ENCODE measurements at regions of chr6 and their contacts with region 1.

Region 1: GRCh38 chr6:37858363-37858762 is 38.8 kb downstream of the ZFAND3 start:
- DNase-seq: no peak
- H3K4me3 Mint-ChIP-seq: no peak overlapping the region
- H3K27ac Mint-ChIP-seq: peak overlapping the region; percentile 92
- H3K4me1 Mint-ChIP-seq: peaks cover 49% of the 10 kb centered on the region
- H3K27me3 Mint-ChIP-seq: no peaks in the 10 kb centered on the region

Region 2: DNA sequence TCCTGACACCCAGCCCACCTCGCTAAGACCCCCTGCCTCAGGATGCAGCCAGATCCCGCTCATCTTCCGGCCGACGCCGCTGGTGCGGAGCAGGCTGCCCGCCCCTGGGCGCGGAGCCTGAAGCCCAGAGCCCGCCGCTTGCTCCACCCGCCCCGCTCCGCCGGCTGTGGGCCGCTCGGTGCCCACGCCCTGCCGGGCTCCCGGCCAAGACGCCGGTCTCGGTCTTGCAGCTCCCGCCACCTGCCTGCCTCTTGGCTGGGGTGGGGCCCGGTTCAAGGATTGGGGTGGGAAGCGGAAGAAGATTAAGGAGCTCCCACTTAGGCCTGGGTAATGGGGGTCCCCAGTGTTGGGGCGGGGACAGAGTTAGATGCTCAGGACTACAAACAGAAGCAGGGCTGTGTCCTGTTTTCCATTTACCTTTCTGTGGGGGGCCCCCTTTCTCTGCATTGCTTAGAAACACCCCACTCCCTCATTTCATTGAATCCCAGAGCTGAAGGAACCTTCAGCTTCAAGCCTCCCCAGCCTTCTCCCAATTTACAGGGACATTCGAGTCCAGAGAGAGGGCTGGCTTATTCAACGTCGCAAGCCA is 233.3 kb before region 1 on chr6:
- intact Hi-C with region 1: no loop called
- DNase-seq: no peak
- H3K4me3 Mint-ChIP-seq: no peak overlapping the region
- H3K27ac Mint-ChIP-seq: no peak overlapping the region
- H3K4me1 Mint-ChIP-seq: peaks cover 18% of the 10 kb centered on the region
- H3K27me3 Mint-ChIP-seq: peaks cover 21% of the 10 kb centered on the region

Region 3: GRCh38 chr6:37819177-37819823 is 39.1 kb before region 1 on chr6 and contains the start of gene ZFAND3:
- intact Hi-C with region 1: loop called (anchors 1 kb)
- DNase-seq: peak; percentile 93
- H3K4me3 Mint-ChIP-seq: peak within 1 kb of the TSS; percentile 95
- H3K27ac Mint-ChIP-seq: peak within 1 kb of the TSS; percentile 97
- H3K4me1 Mint-ChIP-seq: peaks cover 52% of the 10 kb centered on the region
- H3K27me3 Mint-ChIP-seq: peaks cover 9% of the 10 kb centered on the region
- total RNA-seq, gene ZFAND3: 36.9 and 44.1 TPM in 2 replicates

Region 4: DNA sequence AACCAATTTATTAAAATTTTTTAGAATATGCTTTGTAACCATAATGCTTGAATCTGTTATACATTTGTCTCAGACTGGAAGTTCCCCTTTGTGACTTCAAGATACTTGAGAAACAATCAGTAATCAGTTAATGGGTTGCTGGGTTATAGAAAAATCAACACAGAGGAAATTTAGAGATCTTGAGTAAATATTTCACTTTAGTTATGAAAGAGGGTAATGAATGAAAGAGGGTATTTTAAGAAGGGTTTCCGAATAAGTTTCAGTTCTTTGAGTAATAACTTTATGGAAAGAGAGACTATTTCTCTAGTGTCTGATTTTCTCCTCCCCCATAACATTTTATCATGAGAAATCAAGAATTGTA is 17.4 kb before region 1 on chr6:
- intact Hi-C with region 1: loop called (anchors 1 kb)
- DNase-seq: no peak
- H3K4me3 Mint-ChIP-seq: no peak overlapping the region
- H3K27ac Mint-ChIP-seq: no peak overlapping the region
- H3K4me1 Mint-ChIP-seq: peaks cover 20% of the 10 kb centered on the region
- H3K27me3 Mint-ChIP-seq: no peaks in the 10 kb centered on the region

Region 5: DNA sequence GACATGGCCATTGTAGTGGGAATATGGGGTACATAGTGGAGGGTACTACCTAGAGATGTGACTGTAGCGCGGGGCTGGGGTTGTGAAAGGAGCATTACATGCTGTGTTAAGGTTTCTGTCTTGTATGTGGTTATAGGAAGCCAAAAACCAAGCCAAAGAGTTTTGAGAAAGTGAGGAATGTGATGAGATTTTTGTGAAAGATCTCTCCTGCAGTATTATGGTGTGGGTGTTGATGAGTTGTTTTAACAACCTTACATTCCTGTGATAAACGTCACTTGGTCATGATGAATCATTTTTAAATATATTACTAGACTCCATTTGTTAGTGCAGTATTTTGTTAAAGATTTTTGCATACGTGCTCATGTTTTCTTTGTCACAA is 10.1 kb after region 1 on chr6:
- intact Hi-C with region 1: loop called (anchors 1 kb)
- DNase-seq: no peak
- H3K4me3 Mint-ChIP-seq: no peak overlapping the region
- H3K27ac Mint-ChIP-seq: peak overlapping the region; percentile 49
- H3K4me1 Mint-ChIP-seq: peaks cover 42% of the 10 kb centered on the region
- H3K27me3 Mint-ChIP-seq: no peaks in the 10 kb centered on the region

Region 6: DNA sequence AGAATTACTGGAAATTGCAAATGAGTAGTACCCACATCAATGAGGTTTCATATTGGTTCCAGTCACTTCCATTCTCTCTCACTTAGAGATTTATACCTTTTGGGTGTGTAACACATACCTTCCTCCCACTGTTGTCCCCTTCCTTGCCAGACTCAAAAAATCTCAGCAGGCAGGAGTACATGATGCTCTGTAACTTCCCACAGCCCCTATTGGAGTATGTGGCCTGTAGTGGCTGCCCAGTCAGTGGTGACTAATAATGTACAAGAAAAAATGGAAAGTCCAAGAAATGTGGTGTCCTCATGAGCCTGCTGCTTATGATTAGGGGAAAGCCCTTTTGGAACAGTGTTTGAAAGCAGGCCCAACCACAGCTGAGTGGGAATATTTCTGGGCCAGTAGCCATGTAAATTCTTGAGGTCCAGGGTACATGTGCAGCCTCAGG is 273.2 kb after region 1 on chr6:
- intact Hi-C with region 1: loop called (anchors 5 kb)
- DNase-seq: no peak
- H3K4me3 Mint-ChIP-seq: peak overlapping the region; percentile 61
- H3K27ac Mint-ChIP-seq: peak overlapping the region; percentile 73
- H3K4me1 Mint-ChIP-seq: peaks cover 15% of the 10 kb centered on the region
- H3K27me3 Mint-ChIP-seq: no peaks in the 10 kb centered on the region

Measured in activated T-helper 1 cell treated with anti-CD3 and anti-CD28 coated beads, Interleukin-12 subunit alpha, Interleukin-12 subunit beta, Interleukin-2, Interleukin-4 antibody, amounts not matched to agents 30 ng/mL and 10 ng/mL and 1 ng/mL, durations not matched to agents 14 hours and 24 hours and 36 hours (primary cell).